ENCODE measurements at regions of chr16 and their contacts with region 1.

Region 1: DNA sequence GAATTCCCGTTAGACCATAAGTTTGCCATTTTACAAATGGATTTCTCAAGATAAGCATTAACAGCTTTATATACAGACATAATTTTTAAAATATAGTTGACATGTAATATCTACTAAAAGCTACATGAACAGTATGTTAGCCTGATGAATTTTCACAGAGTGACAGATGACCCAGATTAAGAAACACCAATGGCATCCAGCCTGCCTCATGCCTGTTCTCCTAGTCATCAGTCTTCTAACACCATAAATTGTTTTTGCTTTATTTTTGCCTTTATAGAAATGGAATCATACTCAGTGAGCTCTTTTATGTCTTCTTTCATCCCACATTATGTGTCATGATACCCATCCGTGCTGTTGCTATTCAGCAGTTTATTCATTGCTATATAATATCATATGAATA is 80.0 kb downstream of the ATF7IP2 start:
- DNase-seq: peak; percentile 3
- ATAC-seq: no peak
- H3K4me3 ChIP-seq: no peak overlapping the region
- H3K27ac ChIP-seq: no peak overlapping the region
- H3K4me1 ChIP-seq: no peaks in the 10 kb centered on the region
- H3K27me3 ChIP-seq: no peaks in the 10 kb centered on the region
- CTCF ChIP-seq: no peak
- POLR2A ChIP-seq: no peak
- RAD21 ChIP-seq: no peak

Region 2: GRCh38 chr16:10338426-10338825 is 127.4 kb before region 1 on chr16:
- CTCF ChIA-PET with region 1: no interaction called
- POLR2A ChIA-PET with region 1: no interaction called
- dilution Hi-C with region 1: no loop called
- in situ Hi-C with region 1: no loop called
- intact Hi-C with region 1: no loop called
- DNase-seq: no peak
- ATAC-seq: no peak
- H3K4me3 ChIP-seq: no peak overlapping the region
- H3K27ac ChIP-seq: no peak overlapping the region
- H3K4me1 ChIP-seq: no peaks in the 10 kb centered on the region
- H3K27me3 ChIP-seq: no peaks in the 10 kb centered on the region
- CTCF ChIP-seq: no peak
- POLR2A ChIP-seq: no peak
- RAD21 ChIP-seq: no peak

Region 3: GRCh38 chr16:10405386-10405939 is 60.4 kb before region 1 on chr16:
- CTCF ChIA-PET with region 1: no interaction called
- POLR2A ChIA-PET with region 1: no interaction called
- dilution Hi-C with region 1: no loop called
- in situ Hi-C with region 1: loop called (anchors 10 kb)
- intact Hi-C with region 1: no loop called
- DNase-seq: peak; percentile 10
- ATAC-seq: no peak
- H3K4me3 ChIP-seq: no peak overlapping the region
- H3K27ac ChIP-seq: no peak overlapping the region
- H3K4me1 ChIP-seq: no peaks in the 10 kb centered on the region
- H3K27me3 ChIP-seq: no peaks in the 10 kb centered on the region
- CTCF ChIP-seq: no peak
- POLR2A ChIP-seq: no peak
- RAD21 ChIP-seq: no peak

Measured in IMR-90 (cell line).